ENCODE measurements at regions of chr5 and their contacts with region 1.

Region 1: DNA sequence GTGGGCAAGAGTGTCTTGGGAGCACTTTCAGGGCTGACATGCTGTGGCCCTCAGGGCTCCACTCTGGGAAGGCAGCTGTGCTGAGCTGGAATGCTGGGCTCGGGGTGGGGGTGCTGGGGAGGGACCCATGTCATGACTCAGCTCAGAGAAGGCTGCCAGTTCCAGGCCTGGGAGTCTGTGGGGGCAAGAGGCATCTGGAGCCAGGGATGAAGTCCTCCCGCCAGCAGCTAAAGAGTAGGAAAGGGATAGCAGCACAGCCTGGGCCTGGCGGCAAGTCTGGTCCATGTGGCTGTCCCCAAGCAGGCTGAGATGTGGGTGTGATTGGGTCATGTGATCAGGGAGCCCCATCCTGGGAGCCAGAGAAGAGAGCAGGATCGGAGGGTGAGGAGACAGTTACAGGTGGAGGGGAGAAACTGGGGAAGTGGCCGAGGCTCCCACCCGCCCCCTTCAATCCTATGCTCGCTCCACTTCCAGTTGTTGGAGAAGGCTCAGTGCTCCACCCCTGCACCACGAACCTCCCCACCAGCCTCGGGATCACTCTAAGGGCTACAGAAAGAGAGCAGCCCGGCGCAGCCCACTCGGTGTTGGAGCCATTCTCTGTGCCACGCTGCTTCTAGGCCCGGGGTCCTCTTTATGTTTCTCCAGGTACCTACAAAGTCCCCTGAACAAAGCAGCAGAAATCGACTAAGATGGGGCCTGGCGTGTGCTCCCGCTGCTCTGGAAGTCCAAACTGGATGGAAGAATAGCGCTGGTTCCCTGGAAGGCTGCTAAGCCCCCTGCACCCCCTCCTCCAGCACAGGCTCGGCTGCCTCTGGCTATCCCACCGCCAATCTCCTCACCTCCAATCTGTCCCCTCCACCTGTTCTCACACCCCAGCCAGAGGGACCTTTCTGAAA is 12.0 kb downstream of the PDGFRB start:
- DNase-seq: peak; percentile 61
- ATAC-seq: peak; percentile 27
- H3K4me3 ChIP-seq: no peak overlapping the region
- H3K27ac ChIP-seq: peak overlapping the region; percentile 62
- H3K4me1 ChIP-seq: peaks cover 91% of the 10 kb centered on the region
- H3K27me3 ChIP-seq: no peaks in the 10 kb centered on the region
- CTCF ChIP-seq: no peak
- EP300 ChIP-seq: no peak
- POLR2A ChIP-seq: no peak
- RAD21 ChIP-seq: no peak

Region 2: DNA sequence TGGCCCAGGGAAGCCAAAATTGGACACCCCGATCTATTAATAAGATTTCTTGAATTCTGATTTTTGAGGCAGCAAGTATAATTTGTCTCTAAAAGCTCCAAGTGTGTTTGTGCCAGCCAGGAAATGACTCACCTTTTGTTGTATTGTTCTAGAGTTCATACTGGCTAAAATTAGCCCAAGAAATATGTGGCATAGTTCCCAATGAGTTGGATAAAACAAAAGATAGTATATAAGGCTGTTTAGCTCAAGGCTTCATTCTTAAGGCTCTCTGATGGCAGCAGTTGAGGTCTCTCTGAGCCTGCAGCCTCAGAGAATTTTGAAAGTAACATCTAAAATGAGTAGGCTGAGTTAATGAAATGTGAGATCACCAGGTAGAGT is 121.4 kb before region 1 on chr5:
- CTCF ChIA-PET with region 1: no interaction called
- POLR2A ChIA-PET with region 1: interaction called, 18 read pairs
- in situ Hi-C with region 1: no loop called
- intact Hi-C with region 1: no loop called
- DNase-seq: no peak
- ATAC-seq: no peak
- H3K4me3 ChIP-seq: no peak overlapping the region
- H3K27ac ChIP-seq: peak overlapping the region; percentile 28
- H3K4me1 ChIP-seq: peaks cover 50% of the 10 kb centered on the region
- H3K27me3 ChIP-seq: no peaks in the 10 kb centered on the region
- CTCF ChIP-seq: no peak
- EP300 ChIP-seq: no peak; a peak in 1 of 4 replicates
- POLR2A ChIP-seq: no peak
- RAD21 ChIP-seq: no peak

Region 3: GRCh38 chr5:150155258-150156026 is 11.8 kb after region 1 on chr5 and contains the start of gene PDGFRB:
- CTCF ChIA-PET with region 1: no interaction called
- POLR2A ChIA-PET with region 1: interaction called, 31 read pairs
- in situ Hi-C with region 1: no loop called
- intact Hi-C with region 1: no loop called
- DNase-seq: no peak
- ATAC-seq: peak; percentile 13; the same call in 2 of the 3 replicates
- H3K4me3 ChIP-seq: no peak within 1 kb of the TSS; a peak in 1 of 6 replicates
- H3K27ac ChIP-seq: no peak within 1 kb of the TSS
- H3K4me1 ChIP-seq: peaks cover 77% of the 10 kb centered on the region
- H3K27me3 ChIP-seq: peaks cover 2 to 35% of the 10 kb centered on the region in 2 experiments; a peak in 3 of 5 replicates
- CTCF ChIP-seq: no peak
- EP300 ChIP-seq: no peak
- POLR2A ChIP-seq: no peak
- RAD21 ChIP-seq: no peak
- total RNA-seq, gene PDGFRB: 1.5 and 4.0 TPM in 2 replicates

Region 4: DNA sequence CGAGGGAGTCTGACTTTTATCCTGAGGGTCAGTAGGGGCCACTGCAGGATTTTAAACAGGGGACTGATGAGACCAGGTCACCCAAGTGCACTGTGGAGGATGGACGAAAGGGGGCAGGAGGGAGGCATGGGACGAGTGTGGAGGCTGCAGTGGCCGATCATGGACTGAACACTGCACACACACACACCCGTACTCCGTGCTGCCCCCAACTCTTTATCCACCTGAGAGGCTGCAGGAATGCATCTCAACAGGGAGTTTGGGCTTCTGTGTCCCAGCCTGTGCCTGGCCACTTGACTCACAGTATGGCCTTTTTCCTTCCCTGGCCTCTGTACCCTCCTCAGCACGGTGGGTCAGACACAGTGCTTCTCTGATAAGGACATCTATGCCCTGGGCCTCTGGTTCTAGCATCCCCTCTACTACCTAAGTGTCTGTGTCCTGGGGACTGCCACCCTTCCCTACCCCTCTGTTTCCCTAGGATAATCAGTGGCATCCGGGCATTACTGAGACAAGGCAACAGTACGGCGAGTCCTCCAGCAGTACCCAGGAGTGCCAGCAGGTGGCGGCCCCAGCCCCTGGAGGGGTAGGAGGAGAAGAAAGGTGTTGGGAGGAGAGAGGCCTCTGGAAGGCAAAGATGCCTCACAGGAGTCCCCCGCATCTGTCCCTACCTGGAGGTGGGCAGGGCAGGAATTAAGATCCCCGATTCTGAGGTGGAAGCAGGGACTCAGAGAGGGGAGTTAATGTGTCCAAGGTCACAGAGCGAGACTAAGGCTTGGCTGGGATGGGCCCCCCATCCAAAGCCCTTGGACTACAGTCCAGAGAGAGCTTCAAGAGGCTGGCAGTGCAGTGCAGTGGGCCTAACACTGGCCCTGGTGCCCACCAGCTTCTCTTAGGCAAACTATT is 17.9 kb after region 1 on chr5:
- CTCF ChIA-PET with region 1: no interaction called
- POLR2A ChIA-PET with region 1: interaction called, 12 read pairs
- in situ Hi-C with region 1: no loop called
- intact Hi-C with region 1: loop called (anchors 1 kb)
- DNase-seq: peak; percentile 69
- ATAC-seq: peak; percentile 88
- H3K4me3 ChIP-seq: peak overlapping the region; percentile 29 to 73 (median 34); a peak in 5 of 6 replicates
- H3K27ac ChIP-seq: no peak overlapping the region
- H3K4me1 ChIP-seq: peaks cover 71% of the 10 kb centered on the region
- H3K27me3 ChIP-seq: peaks cover 1 to 2% of the 10 kb centered on the region in 2 experiments; a peak in 3 of 5 replicates
- CTCF ChIP-seq: peak; percentile 87
- EP300 ChIP-seq: no peak
- POLR2A ChIP-seq: no peak
- RAD21 ChIP-seq: peak; percentile 69

Region 5: DNA sequence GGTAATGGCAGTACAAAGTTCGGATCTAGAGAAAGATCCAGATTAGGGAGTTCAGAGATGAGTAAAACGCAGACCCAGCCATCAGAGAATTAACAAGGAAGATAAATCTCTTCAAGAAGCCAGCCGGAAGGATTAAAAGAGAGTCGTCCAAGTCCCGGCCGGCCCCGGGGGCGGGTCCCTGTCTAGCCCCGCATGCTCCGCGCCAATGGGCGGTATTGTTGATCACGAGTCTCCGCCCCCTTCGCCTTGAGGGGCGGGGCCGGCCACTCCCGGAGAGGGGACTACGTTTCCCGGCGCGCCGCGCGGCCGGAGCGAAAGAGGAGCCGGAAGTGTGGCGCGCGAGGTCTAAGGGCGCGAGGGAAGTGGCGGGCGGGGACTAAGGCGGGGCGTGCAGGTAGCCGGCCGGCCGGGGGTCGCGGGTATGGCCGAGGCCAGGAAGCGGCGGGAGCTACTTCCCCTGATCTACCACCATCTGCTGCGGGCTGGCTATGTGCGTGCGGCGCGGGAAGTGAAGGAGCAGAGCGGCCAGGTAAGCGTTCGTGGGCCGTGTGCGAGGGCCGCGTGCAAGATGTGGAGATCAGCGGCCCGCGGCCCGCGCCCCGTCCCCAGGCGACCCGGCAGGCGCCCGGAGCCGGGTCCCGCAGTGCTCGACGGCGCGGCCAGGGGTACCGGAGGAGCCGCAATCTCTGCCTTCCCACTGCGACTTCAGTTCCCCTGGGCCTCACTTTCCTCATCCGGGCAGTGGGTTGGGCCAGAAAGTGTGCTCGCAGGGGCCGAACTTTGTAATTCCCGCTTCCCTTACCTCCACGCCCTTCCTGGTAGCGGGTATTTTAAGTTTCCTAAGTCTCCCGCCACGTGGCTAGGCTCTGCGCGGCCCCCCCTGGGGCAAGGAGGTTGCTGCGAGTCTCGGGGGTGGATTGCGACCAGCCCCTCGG is 214.0 kb after region 1 on chr5 and contains the start of gene TCOF1:
- CTCF ChIA-PET with region 1: no interaction called
- POLR2A ChIA-PET with region 1: no interaction called
- in situ Hi-C with region 1: no loop called
- intact Hi-C with region 1: loop called (anchors 5 kb)
- DNase-seq: peak; percentile 90
- ATAC-seq: peak; percentile 93
- H3K4me3 ChIP-seq: peak within 1 kb of the TSS; percentile 80 to 100 (median 84)
- H3K27ac ChIP-seq: peak within 1 kb of the TSS; percentile 72
- H3K4me1 ChIP-seq: peaks cover 74% of the 10 kb centered on the region
- H3K27me3 ChIP-seq: no peaks in the 10 kb centered on the region; a peak in 1 of 5 replicates
- CTCF ChIP-seq: no peak
- EP300 ChIP-seq: no peak
- POLR2A ChIP-seq: peak in 1 of 2 experiments; percentile 62; a peak in 3 of 4 replicates
- RAD21 ChIP-seq: peak; percentile 14; the same call in 1 of the 2 replicates
- total RNA-seq, gene TCOF1: 41.6 and 44.5 TPM in 2 replicates

Region 6: GRCh38 chr5:150428106-150428876 is 284.7 kb after region 1 on chr5:
- CTCF ChIA-PET with region 1: no interaction called
- POLR2A ChIA-PET with region 1: no interaction called
- in situ Hi-C with region 1: no loop called
- intact Hi-C with region 1: loop called (anchors 10 kb)
- DNase-seq: peak; percentile 83
- ATAC-seq: peak; percentile 90
- H3K4me3 ChIP-seq: peak overlapping the region; percentile 49 to 71 (median 56)
- H3K27ac ChIP-seq: peak overlapping the region; percentile 89
- H3K4me1 ChIP-seq: peaks cover 45% of the 10 kb centered on the region
- H3K27me3 ChIP-seq: no peaks in the 10 kb centered on the region; a peak in 1 of 5 replicates
- CTCF ChIP-seq: no peak
- EP300 ChIP-seq: no peak
- POLR2A ChIP-seq: peak; percentile 81 to 85
- RAD21 ChIP-seq: peak; percentile 39; the same call in 1 of the 2 replicates